CD8-positive, alpha-beta memory T cell (primary cell): ENCODE measurements at regions of chr19 and their contacts with region 1.

Region 1: DNA sequence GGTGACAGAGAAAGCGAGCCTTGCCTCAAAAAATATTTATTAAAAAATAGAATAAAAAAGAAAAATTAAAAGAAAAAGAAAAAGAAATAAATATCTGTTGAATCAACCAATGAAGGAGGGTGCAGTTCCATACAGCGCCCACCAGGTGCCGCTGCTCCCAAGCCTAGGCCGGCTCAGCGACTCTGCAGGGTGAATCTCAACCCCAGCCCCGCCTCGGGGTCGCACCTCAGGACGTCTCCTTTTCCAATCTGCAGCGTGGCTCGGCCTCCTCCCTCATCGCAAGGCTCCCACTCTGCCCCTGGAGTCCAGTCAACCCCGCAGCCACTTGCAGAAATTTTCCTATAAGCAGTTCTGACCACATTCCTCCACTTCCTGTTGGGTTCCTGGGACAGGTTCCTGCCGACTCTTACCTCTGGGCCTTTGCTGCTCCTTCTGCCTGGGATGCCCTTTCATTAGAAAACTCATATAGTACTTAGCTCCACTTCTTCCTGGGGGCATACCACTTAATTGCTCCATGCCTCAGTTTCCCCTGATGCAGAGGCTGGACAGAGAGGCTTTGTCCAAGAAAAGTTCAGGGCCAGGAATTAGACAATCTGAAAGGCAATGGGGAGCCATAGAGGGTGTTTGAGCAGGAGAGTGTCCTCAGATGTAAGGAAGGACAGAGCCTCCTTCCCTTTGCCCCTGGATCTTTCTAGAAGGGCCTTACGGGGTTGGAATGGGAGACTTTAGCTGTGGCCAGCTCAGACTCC is 24.3 kb downstream of the NFILZ start:
- DNase-seq: peak; percentile 56 to 78 (median 61)
- H3K4me3 ChIP-seq: peak overlapping the region; percentile 59
- H3K4me3 Mint-ChIP-seq: peak overlapping the region in 6 of 7 donors; percentile 70 to 91 (median 76)
- H3K27ac ChIP-seq: no peak overlapping the region
- H3K27ac Mint-ChIP-seq: peak overlapping the region in 2 of 8 donors; percentile 60 to 81
- H3K4me1 ChIP-seq: peaks cover 13% of the 10 kb centered on the region
- H3K4me1 Mint-ChIP-seq: peaks cover 31 to 36% (median 32%) of the 10 kb centered on the region in 3 donors
- H3K27me3 ChIP-seq: no peaks in the 10 kb centered on the region
- H3K27me3 Mint-ChIP-seq: peaks cover 0 to 4% of the 10 kb centered on the region in 2 donors

Region 2: GRCh38 chr19:8688930-8689329 is 34.2 kb after region 1 on chr19:
- CTCF ChIA-PET with region 1: interaction called, 115 read pairs
- POLR2A ChIA-PET with region 1: interaction called, 4 read pairs
- DNase-seq: no peak
- H3K4me3 ChIP-seq: no peak overlapping the region
- H3K4me3 Mint-ChIP-seq: no peak overlapping the region
- H3K27ac ChIP-seq: no peak overlapping the region
- H3K27ac Mint-ChIP-seq: no peak overlapping the region
- H3K4me1 ChIP-seq: peaks cover under 1% of the 10 kb centered on the region
- H3K4me1 Mint-ChIP-seq: no peaks in the 10 kb centered on the region
- H3K27me3 ChIP-seq: no peaks in the 10 kb centered on the region
- H3K27me3 Mint-ChIP-seq: peaks cover 4 to 34% of the 10 kb centered on the region in 2 donors

Region 3: DNA sequence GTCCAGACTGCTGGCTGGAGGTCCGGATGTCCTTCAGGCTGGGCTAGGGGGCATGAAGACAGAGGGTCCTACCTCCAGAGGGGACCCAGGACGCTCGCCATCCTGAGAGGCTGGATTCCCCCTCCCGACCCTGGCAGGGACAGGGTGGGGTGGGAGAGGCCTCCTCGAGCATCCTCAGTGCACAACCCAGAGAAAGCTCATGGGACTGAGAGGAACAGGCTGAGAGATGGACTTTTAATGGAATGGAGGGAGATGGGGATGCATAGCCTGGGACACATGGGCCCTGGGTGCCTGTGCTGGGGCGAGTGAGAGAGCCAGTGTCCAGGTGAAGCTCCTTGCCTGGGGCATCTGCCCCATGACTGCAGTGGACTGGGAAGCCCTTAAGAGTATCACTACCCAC is 40.7 kb after region 1 on chr19:
- CTCF ChIA-PET with region 1: interaction called, 115 read pairs
- POLR2A ChIA-PET with region 1: interaction called, 4 read pairs
- DNase-seq: no peak
- H3K4me3 ChIP-seq: no peak overlapping the region
- H3K4me3 Mint-ChIP-seq: no peak overlapping the region
- H3K27ac ChIP-seq: no peak overlapping the region
- H3K27ac Mint-ChIP-seq: no peak overlapping the region
- H3K4me1 ChIP-seq: peaks cover 8% of the 10 kb centered on the region
- H3K4me1 Mint-ChIP-seq: peaks cover 14 to 18% (median 16%) of the 10 kb centered on the region in 3 donors
- H3K27me3 ChIP-seq: no peaks in the 10 kb centered on the region
- H3K27me3 Mint-ChIP-seq: peaks cover 5 to 32% of the 10 kb centered on the region in 2 donors